ENCODE measurements at regions of chr17 and their contacts with region 1.

Region 1: GRCh38 chr17:32486111-32486700 is 587 bp upstream of the CDK5R1 start:
- DNase-seq: peak; percentile 70 to 76 (median 74)
- H3K4me3 ChIP-seq: no peak overlapping the region
- H3K4me3 Mint-ChIP-seq: peak overlapping the region; percentile 65 to 85 (median 80)
- H3K27ac ChIP-seq: no peak overlapping the region
- H3K27ac Mint-ChIP-seq: peak overlapping the region in 6 of 7 donors; percentile 48 to 93 (median 88)
- H3K4me1 ChIP-seq: peaks cover 42% of the 10 kb centered on the region
- H3K4me1 Mint-ChIP-seq: peaks cover 15 to 50% (median 31%) of the 10 kb centered on the region in 4 donors
- H3K27me3 ChIP-seq: no peaks in the 10 kb centered on the region
- H3K27me3 Mint-ChIP-seq: no peaks in the 10 kb centered on the region

Region 2: DNA sequence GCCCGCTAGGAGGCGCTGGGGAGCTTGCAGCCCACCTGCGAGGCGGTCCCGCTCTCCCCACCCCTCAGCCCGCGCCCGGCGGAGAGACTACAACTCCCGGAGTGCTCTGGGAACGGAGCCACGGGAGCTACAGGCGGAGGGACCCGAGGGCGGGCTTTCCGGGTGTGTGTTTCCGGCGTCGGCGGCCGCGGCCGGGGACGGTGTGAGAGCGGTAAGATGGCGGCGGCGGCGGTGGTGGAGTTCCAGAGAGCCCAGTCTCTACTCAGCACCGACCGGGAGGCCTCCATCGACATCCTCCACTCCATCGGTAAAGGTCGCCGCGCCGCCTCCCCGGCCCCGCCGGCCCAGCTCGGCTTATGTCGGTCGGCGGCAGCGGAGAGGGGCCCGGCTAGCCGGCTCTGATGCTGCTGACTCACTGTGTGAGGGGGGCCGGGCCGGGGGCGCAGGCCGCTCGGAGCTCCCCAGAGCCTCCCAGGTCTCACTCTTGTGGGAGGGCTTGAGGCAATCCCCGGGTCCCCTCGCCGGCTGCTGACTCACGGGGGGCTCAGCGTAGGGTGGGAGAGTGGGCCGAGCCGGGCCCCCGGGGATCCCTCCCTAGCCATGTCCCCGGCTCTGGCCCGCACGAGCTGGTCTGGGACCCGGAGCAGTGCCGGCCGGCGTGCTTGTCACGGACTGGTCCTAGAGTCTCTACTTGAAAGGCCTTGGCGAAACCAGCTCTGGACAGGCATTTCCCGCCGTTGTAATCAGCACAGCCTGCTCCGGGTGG is 41.7 kb before region 1 on chr17 and contains the start of gene PSMD11:
- CTCF ChIA-PET with region 1: interaction called, 10 read pairs
- POLR2A ChIA-PET with region 1: interaction called, 4 read pairs
- intact Hi-C with region 1: loop called (anchors 2 kb)
- DNase-seq: peak; percentile 98 to 99 (median 99)
- H3K4me3 ChIP-seq: peak within 1 kb of the TSS; percentile 66 to 71
- H3K4me3 Mint-ChIP-seq: peak within 1 kb of the TSS; percentile 85 to 96 (median 90)
- H3K27ac ChIP-seq: peak within 1 kb of the TSS; percentile 79
- H3K27ac Mint-ChIP-seq: peak within 1 kb of the TSS; percentile 33 to 96 (median 90)
- H3K4me1 ChIP-seq: peaks cover 27% of the 10 kb centered on the region
- H3K4me1 Mint-ChIP-seq: peaks cover 21 to 43% (median 31%) of the 10 kb centered on the region in 4 donors
- H3K27me3 ChIP-seq: no peaks in the 10 kb centered on the region
- H3K27me3 Mint-ChIP-seq: no peaks in the 10 kb centered on the region
- total RNA-seq, gene PSMD11: 58.0 to 68.2 TPM

Region 3: DNA sequence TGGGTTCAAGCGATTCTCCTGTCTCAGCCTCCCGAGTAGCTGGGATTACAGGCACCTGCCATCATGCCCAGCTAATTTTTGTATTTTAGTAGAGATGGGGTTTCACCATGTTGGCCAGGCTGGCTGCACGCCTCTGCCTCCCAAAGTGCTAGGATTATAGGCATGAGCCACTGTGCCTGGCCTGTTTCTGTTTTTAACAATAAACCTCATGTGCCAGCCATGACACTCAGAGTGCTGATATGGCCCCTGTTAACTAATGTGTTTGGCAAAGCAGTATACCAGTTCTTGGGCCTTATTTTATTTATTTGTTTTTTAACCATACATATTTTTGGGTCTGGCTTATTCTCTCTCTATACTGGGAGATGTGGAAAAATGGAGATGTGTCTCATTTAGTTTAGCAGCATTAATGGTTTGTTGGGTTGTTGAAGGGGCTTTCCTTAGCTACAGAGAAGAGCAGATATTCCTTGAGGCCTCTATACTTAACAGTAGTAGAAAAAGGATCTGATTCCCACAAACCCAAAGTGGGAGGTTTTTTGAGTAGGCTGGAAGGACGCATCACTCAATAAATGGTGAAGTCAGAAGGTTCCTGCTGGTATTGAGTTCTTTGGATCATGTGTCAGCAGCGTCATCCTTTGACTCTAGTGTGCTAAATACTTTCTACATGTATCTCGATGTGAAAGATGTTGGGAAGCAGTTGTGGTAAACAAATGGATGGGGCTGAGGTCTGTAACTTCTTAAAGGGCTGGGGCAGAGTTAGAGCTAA is 15.6 kb before region 1 on chr17:
- CTCF ChIA-PET with region 1: interaction called, 105 read pairs
- POLR2A ChIA-PET with region 1: interaction called, 5 read pairs
- intact Hi-C with region 1: no loop called
- DNase-seq: no peak
- H3K4me3 ChIP-seq: no peak overlapping the region
- H3K4me3 Mint-ChIP-seq: no peak overlapping the region
- H3K27ac ChIP-seq: no peak overlapping the region
- H3K27ac Mint-ChIP-seq: peak overlapping the region in 3 of 7 donors; percentile 30 to 69 (median 55)
- H3K4me1 ChIP-seq: no peaks in the 10 kb centered on the region
- H3K4me1 Mint-ChIP-seq: peaks cover 0 to 12% (median 5%) of the 10 kb centered on the region in 4 donors
- H3K27me3 ChIP-seq: no peaks in the 10 kb centered on the region
- H3K27me3 Mint-ChIP-seq: no peaks in the 10 kb centered on the region

Region 4: DNA sequence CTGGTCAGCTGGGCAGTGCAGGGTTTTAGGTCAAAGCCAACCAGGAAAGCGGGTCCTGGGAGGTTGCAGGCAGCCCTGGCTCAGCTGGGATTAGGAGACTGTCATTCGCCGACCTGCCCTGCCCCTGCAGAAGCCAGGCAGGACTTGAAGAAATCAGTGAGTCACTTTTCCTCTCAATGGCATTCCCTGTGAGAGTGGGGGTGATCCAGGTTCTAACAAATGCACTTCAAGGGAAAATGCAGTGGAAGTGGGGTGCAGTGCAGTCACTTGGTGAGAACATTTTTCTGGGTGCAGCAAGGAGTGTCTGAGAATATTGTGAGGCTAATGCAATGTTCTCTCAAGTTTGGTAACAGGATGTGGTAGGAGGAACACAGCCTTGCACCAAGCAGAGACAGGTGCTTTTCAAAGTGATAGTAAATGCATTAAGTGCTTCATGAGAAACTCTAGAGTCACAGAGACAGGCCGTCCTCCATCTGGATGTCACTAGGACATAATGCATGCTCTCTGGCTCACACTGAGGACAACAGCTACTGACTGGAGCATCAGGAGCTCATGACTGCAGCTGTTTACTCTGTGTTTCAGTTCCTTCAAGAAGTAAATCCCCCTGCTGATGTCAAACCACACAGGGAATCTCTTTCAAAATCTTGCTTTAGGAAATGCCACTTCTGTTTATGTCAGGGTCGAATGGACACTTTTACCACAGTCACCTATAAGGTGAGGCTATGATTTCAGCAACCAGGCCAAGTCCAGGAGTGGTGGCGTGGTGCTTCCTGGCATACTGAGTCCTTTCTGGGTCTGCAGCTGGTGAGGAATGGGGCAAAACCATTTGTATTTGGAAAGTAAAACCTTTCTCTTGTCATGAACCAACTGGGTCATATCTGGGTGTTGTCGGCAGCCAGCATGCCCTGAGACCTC is 17.3 kb after region 1 on chr17:
- CTCF ChIA-PET with region 1: interaction called, 5 read pairs
- POLR2A ChIA-PET with region 1: interaction called, 30 read pairs
- intact Hi-C with region 1: loop called (anchors 1 kb)
- DNase-seq: peak; percentile 64 to 77 (median 74)
- H3K4me3 ChIP-seq: peak overlapping the region; percentile 4 to 16
- H3K4me3 Mint-ChIP-seq: peak overlapping the region; percentile 66 to 88 (median 79)
- H3K27ac ChIP-seq: peak overlapping the region; percentile 73
- H3K27ac Mint-ChIP-seq: peak overlapping the region; percentile 95 to 99 (median 96)
- H3K4me1 ChIP-seq: peaks cover 70% of the 10 kb centered on the region
- H3K4me1 Mint-ChIP-seq: peaks cover 46 to 69% (median 59%) of the 10 kb centered on the region in 4 donors
- H3K27me3 ChIP-seq: no peaks in the 10 kb centered on the region
- H3K27me3 Mint-ChIP-seq: no peaks in the 10 kb centered on the region

Region 5: GRCh38 chr17:32609085-32609484 is 122.9 kb after region 1 on chr17:
- CTCF ChIA-PET with region 1: interaction called, 34 read pairs
- POLR2A ChIA-PET with region 1: interaction called, 5 read pairs
- intact Hi-C with region 1: loop called (anchors 1 kb)
- DNase-seq: peak; percentile 67 to 74 (median 73)
- H3K4me3 ChIP-seq: no peak overlapping the region
- H3K4me3 Mint-ChIP-seq: no peak overlapping the region
- H3K27ac ChIP-seq: no peak overlapping the region
- H3K27ac Mint-ChIP-seq: peak overlapping the region in 3 of 7 donors; percentile 3 to 56 (median 11)
- H3K4me1 ChIP-seq: no peaks in the 10 kb centered on the region
- H3K4me1 Mint-ChIP-seq: peaks cover 5 to 9% (median 5%) of the 10 kb centered on the region in 4 donors
- H3K27me3 ChIP-seq: no peaks in the 10 kb centered on the region
- H3K27me3 Mint-ChIP-seq: no peaks in the 10 kb centered on the region

Region 6: DNA sequence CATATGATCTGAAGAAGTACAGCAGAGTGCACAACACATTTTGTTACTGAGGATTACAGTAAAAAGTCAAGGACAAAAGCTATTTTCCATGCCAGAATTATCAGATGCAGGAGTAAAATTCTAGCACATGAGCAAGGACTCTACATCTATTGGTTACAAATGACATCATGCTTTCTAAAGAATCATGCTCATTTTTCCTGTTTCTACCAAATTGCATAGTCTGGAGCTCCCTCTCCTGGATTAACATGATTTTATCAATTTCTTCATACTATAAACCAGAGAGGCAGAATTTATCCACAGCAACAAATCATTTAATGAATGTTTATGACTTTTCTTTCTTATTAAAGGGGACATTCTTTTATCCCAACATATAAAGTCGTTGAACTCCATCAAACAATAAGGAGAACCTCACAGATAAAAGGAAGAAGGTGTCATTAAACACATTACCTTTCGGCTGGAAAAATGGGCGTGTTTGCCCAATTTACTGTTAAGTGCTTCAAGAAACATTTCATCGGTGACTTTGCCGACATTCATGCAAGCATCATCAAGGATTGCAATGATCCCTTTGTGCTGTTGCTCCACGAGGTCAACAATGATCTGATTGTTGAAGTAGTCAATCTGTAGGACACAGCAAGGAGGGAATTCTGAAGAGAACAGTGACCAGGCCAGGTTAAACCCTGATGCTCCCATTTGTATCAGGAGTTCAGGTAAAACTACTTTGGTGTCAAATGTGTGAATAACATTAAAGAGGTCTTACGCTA is 269.0 kb after region 1 on chr17:
- CTCF ChIA-PET with region 1: interaction called, 17 read pairs
- POLR2A ChIA-PET with region 1: no interaction called
- intact Hi-C with region 1: loop called (anchors 1 kb)
- DNase-seq: peak in 4 of 5 donors; percentile 51 to 57 (median 52)
- H3K4me3 ChIP-seq: no peak overlapping the region
- H3K4me3 Mint-ChIP-seq: no peak overlapping the region
- H3K27ac ChIP-seq: no peak overlapping the region
- H3K27ac Mint-ChIP-seq: peak overlapping the region in 1 of 7 donors; percentile 30
- H3K4me1 ChIP-seq: peaks cover 13% of the 10 kb centered on the region
- H3K4me1 Mint-ChIP-seq: peaks cover 9 to 13% (median 13%) of the 10 kb centered on the region in 4 donors
- H3K27me3 ChIP-seq: no peaks in the 10 kb centered on the region
- H3K27me3 Mint-ChIP-seq: no peaks in the 10 kb centered on the region

Measured in CD4-positive, alpha-beta memory T cell (primary cell).